ENCODE measurements at regions of chr11 and their contacts with region 1.

Region 1: GRCh38 chr11:66677599-66678375 is at the start of gene RBM4B:
- DNase-seq: peak; percentile 91
- H3K4me3 Mint-ChIP-seq: peak within 1 kb of the TSS; percentile 89
- H3K27ac Mint-ChIP-seq: peak within 1 kb of the TSS; percentile 98
- H3K4me1 Mint-ChIP-seq: peaks cover 18% of the 10 kb centered on the region
- H3K27me3 Mint-ChIP-seq: no peaks in the 10 kb centered on the region
- CTCF ChIP-seq: no peak
- total RNA-seq, gene RBM4B: 9.5 and 13.5 TPM in 2 replicates

Region 2: DNA sequence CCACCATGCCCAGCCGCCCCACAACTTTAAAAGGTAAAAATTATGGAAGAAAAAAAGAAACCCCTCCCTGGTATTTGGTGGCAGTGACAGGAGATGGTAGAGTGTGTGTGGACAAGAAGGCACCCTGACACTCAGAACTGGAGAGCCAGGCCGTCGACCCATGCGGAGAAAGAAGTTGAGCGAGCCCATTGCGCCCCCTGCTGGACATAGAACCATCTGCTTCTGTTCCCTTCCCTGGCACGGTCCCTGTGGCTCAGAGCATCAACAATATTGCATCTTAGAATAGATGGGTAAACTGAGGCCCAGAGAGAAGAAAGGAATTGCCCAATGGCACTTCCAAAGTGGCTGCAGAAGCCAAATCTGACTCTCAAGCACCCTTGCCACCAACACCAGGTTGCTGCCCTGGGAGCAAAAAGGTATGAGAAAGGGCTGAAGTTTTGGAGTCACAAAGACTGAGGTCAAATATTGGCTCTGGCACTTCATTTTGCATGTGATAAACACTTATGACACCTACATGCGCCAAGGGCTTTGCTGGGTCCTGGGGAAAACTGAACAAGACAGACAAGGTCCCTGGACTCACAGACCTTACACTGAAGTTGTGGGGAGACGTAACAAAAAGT is 247.7 kb before region 1 on chr11:
- CTCF ChIA-PET with region 1: interaction called, 5 read pairs
- POLR2A ChIA-PET with region 1: no interaction called
- intact Hi-C with region 1: loop called (anchors 5 kb)
- DNase-seq: peak; percentile 73
- H3K4me3 Mint-ChIP-seq: no peak overlapping the region
- H3K27ac Mint-ChIP-seq: no peak overlapping the region
- H3K4me1 Mint-ChIP-seq: no peaks in the 10 kb centered on the region
- H3K27me3 Mint-ChIP-seq: peaks cover 6% of the 10 kb centered on the region
- CTCF ChIP-seq: peak; percentile 90

Region 3: GRCh38 chr11:66568124-66568916 is 109.5 kb before region 1 on chr11 and contains the start of gene CTSF:
- CTCF ChIA-PET with region 1: interaction called, 5 read pairs
- POLR2A ChIA-PET with region 1: interaction called, 16 read pairs
- intact Hi-C with region 1: no loop called
- DNase-seq: peak; percentile 82
- H3K4me3 Mint-ChIP-seq: peak within 1 kb of the TSS; percentile 71
- H3K27ac Mint-ChIP-seq: peak within 1 kb of the TSS; percentile 77
- H3K4me1 Mint-ChIP-seq: peaks cover 7% of the 10 kb centered on the region
- H3K27me3 Mint-ChIP-seq: peaks cover under 1% of the 10 kb centered on the region
- CTCF ChIP-seq: no peak
- total RNA-seq, gene CTSF: 8.6 and 11.8 TPM in 2 replicates

Region 4: DNA sequence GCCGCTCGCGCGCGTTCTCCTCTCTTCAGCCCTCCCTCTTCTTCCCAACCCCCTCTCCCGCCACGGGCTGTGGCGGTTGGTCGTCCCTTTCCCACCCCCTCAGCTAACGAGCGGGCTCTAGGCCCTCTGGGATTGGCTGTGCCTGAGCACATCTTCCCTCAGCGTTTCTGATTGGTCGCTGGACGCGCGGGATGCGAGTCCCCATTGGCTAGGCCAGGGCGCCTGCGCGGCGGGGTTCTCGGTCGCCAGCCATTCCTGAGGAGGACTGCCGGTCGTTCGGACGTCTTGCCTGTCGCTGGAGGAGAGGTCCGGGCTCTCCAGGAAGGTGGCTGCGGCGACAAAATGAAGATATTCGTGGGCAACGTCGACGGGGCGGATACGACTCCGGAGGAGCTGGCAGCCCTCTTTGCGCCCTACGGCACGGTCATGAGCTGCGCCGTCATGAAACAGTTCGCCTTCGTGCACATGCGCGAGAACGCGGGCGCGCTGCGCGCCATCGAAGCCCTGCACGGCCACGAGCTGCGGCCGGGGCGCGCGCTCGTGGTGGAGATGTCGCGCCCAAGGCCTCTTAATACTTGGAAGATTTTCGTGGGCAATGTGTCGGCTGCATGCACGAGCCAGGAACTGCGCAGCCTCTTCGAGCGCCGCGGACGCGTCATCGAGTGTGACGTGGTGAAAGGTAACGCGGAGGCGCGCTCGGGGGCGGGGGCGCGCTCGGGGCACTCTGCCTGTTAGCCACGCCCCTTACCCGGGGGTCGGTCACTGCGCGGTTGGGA is 61.2 kb before region 1 on chr11 and contains the start of gene RBM14:
- CTCF ChIA-PET with region 1: interaction called, 12 read pairs
- POLR2A ChIA-PET with region 1: interaction called, 31 read pairs
- intact Hi-C with region 1: no loop called
- DNase-seq: peak; percentile 99
- H3K4me3 Mint-ChIP-seq: peak within 1 kb of the TSS; percentile 86
- H3K27ac Mint-ChIP-seq: peak within 1 kb of the TSS; percentile 96
- H3K4me1 Mint-ChIP-seq: peaks cover 20% of the 10 kb centered on the region
- H3K27me3 Mint-ChIP-seq: no peaks in the 10 kb centered on the region
- CTCF ChIP-seq: no peak
- total RNA-seq, gene RBM14: 78.1 and 88.3 TPM in 2 replicates

Measured in MCF 10A (cell line).